GM12878 (cell line): ENCODE measurements at regions of chr17 and their contacts with region 1.

Region 1: DNA sequence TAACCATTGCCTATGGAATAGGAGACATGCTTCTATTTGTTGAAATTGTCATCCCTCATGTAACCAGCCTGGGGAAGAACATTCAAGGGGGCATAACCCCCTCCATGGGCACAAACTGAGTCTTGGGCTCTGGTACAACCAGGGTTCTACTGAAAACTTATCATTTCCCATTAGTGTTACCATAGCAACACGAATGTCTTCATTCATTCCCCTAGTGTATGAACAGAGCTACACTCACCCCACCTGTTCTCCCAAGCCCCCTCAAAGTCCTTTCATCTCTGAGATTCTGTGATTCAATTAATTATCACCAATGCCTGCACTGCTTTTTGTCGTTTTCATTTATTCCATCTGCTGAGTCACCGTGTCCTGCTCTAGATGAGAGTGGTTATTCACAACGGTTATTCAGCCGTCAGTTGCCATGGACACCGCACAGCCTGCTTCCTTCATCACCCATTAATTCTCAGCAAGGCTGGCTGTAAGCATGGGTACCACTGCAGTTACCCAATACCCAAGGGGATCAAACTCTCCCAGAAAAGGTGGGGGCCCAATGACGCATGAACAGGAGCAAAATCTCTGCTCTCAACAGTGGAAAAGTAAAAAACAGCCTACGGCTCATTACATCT is 1.6 kb upstream of the GAST start:
- DNase-seq: no peak
- ATAC-seq: no peak
- H3K4me3 ChIP-seq: no peak overlapping the region
- H3K27ac ChIP-seq: no peak overlapping the region
- H3K4me1 ChIP-seq: no peaks in the 10 kb centered on the region
- H3K27me3 ChIP-seq: no peaks in the 10 kb centered on the region; a peak in 3 of 4 replicates
- CTCF ChIP-seq: no peak
- EP300 ChIP-seq: no peak
- POLR2A ChIP-seq: no peak
- RAD21 ChIP-seq: no peak

Region 2: DNA sequence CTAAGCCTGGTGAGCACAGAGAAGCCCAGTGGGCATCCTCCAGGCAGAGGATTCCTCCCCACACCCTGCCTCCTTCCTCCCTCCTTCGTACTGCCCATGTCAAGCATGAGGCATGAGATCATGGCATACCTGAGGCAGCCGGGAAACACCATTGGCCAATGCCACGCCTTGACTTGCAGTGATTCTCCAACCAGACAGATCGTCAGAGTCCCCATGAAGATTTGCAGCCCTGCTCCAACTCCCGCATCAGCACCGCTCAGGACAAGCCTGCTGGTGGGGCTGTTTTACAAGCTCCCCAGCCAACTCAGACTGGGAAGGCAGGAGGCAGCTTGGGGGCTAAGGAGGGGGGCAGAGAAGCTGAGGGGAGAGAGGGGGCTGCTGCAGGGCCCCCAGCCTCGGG is 95.1 kb before region 1 on chr17:
- CTCF ChIA-PET with region 1: no interaction called
- POLR2A ChIA-PET with region 1: no interaction called
- RAD21 ChIA-PET with region 1: no interaction called
- SMC1A ChIA-PET with region 1: no interaction called
- in situ Hi-C with region 1: no loop called
- intact Hi-C with region 1: no loop called
- DNase-seq: no peak
- ATAC-seq: no peak
- H3K4me3 ChIP-seq: no peak overlapping the region
- H3K27ac ChIP-seq: no peak overlapping the region
- H3K4me1 ChIP-seq: no peaks in the 10 kb centered on the region
- H3K27me3 ChIP-seq: peaks cover 0 to 2% of the 10 kb centered on the region in 2 experiments; a peak in 2 of 4 replicates
- CTCF ChIP-seq: no peak
- EP300 ChIP-seq: no peak
- POLR2A ChIP-seq: no peak
- RAD21 ChIP-seq: no peak

Region 3: DNA sequence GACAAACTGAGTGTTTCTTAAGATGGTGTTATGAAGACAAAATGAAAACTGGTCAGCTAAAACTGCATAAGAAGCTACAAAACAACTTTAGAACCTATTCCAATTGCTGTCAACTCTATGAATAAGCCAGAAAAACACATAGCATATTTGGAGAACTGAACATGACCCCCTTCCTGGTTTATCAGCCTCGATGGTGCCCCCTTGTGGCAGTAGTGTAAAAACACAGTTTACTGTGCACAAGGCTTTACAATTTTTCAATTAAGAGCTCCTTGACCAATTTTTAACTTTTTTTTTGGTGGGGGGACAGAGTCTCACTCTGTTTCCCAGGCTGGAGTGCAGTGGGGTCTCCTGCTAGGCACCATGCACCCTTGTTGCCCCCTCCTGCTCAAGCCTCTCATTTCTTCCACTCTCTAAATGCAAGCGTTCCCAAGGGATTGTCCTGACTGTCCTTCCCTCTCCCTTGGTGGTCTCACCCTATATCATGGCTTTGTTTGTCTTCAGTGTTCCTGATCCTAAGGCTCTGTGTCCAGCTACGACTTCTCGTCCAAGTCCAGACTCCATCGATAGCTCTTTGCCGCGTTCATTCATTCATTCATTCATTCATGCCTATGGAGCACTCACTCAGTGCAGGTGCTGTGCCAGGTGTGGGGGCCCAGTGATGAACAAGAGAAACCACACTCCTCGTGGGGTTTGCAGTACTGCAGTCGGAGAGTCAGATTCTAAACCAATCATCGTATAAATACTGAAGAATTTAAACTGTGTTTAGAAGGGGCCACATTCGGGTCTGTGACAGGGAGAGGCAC is 14.4 kb before region 1 on chr17:
- CTCF ChIA-PET with region 1: interaction called, 11 read pairs
- POLR2A ChIA-PET with region 1: interaction called, 4 read pairs
- RAD21 ChIA-PET with region 1: interaction called, 6 read pairs
- SMC1A ChIA-PET with region 1: no interaction called
- in situ Hi-C with region 1: no loop called
- intact Hi-C with region 1: no loop called
- DNase-seq: no peak
- ATAC-seq: peak; percentile 66
- H3K4me3 ChIP-seq: no peak overlapping the region
- H3K27ac ChIP-seq: no peak overlapping the region
- H3K4me1 ChIP-seq: peaks cover 2% of the 10 kb centered on the region; the same call in 1 of the 2 replicates
- H3K27me3 ChIP-seq: no peaks in the 10 kb centered on the region
- CTCF ChIP-seq: peak; percentile 73 to 91 (median 76)
- EP300 ChIP-seq: no peak
- POLR2A ChIP-seq: no peak
- RAD21 ChIP-seq: peak; percentile 59

Region 4: GRCh38 chr17:41762841-41763240 is 52.3 kb after region 1 on chr17:
- CTCF ChIA-PET with region 1: no interaction called
- POLR2A ChIA-PET with region 1: no interaction called
- RAD21 ChIA-PET with region 1: no interaction called
- SMC1A ChIA-PET with region 1: no interaction called
- in situ Hi-C with region 1: loop called (anchors 5 kb)
- intact Hi-C with region 1: no loop called
- DNase-seq: no peak
- ATAC-seq: no peak
- H3K4me3 ChIP-seq: no peak overlapping the region
- H3K27ac ChIP-seq: no peak overlapping the region
- H3K4me1 ChIP-seq: no peaks in the 10 kb centered on the region
- H3K27me3 ChIP-seq: no peaks in the 10 kb centered on the region; a peak in 1 of 4 replicates
- CTCF ChIP-seq: no peak
- EP300 ChIP-seq: no peak
- POLR2A ChIP-seq: no peak
- RAD21 ChIP-seq: no peak